ENCODE measurements at regions of chr5 and their contacts with region 1.

Region 1: GRCh38 chr5:188488-189481 is 2.5 kb upstream of the LRRC14B start:
- DNase-seq: peak; percentile 79 to 92 (median 85)
- ATAC-seq: peak; percentile 98
- H3K4me3 ChIP-seq: no peak overlapping the region
- H3K4me3 Mint-ChIP-seq: peak overlapping the region; percentile 34
- H3K27ac ChIP-seq: no peak overlapping the region
- H3K27ac Mint-ChIP-seq: no peak overlapping the region
- H3K4me1 ChIP-seq: peaks cover 17% of the 10 kb centered on the region
- H3K4me1 Mint-ChIP-seq: peaks cover 7% of the 10 kb centered on the region
- H3K27me3 ChIP-seq: peaks cover 4 to 5% of the 10 kb centered on the region in 2 experiments
- H3K27me3 Mint-ChIP-seq: peaks cover 7% of the 10 kb centered on the region
- CTCF ChIP-seq: peak; percentile 91

Region 2: DNA sequence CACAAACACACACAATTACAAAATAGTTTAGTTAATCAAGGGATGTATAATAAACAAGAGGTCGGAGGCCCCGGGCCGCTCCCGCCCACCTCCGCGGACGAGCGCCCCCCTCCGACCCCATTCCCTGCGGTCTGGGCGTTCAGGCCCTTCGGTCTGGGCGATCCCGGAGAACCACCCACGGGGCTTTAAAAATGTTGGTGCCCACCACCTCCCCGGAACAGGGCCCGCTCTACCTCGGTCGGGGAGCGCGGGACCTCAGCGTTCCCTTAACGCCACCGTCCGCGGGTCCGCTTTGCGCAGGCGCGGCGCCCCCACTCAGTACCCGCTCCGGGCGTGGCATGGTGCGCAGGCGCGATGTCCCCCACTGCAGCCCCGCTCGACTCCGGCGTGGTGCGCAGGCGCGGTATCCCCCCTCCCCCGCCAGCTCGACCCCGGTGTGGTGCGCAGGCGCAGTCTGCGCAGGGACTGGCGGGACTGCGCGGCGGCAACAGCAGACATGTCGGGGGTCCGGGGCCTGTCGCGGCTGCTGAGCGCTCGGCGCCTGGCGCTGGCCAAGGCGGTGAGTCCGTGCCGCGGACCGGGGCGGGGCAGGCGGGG is 29.2 kb after region 1 on chr5 and contains the starts of genes CCDC127 and SDHA:
- CTCF ChIA-PET with region 1: interaction called, 19 read pairs
- POLR2A ChIA-PET with region 1: interaction called, 25 read pairs
- intact Hi-C with region 1: loop called (anchors 1 kb)
- DNase-seq: peak; percentile 95 to 100 (median 98)
- ATAC-seq: peak; percentile 81
- H3K4me3 ChIP-seq: peak within 1 kb of the TSS; percentile 93
- H3K4me3 Mint-ChIP-seq: peak within 1 kb of the TSS; percentile 99
- H3K27ac ChIP-seq: peak within 1 kb of the TSS; percentile 57 to 80
- H3K27ac Mint-ChIP-seq: peak within 1 kb of the TSS; percentile 96
- H3K4me1 ChIP-seq: peaks cover 46% of the 10 kb centered on the region
- H3K4me1 Mint-ChIP-seq: peaks cover 68% of the 10 kb centered on the region
- H3K27me3 ChIP-seq: no peaks in the 10 kb centered on the region
- H3K27me3 Mint-ChIP-seq: no peaks in the 10 kb centered on the region
- CTCF ChIP-seq: peak; percentile 30
- total RNA-seq, gene CCDC127: 1.9 to 2.8 TPM
- total RNA-seq, gene SDHA: 244 to 245 TPM

Region 3: DNA sequence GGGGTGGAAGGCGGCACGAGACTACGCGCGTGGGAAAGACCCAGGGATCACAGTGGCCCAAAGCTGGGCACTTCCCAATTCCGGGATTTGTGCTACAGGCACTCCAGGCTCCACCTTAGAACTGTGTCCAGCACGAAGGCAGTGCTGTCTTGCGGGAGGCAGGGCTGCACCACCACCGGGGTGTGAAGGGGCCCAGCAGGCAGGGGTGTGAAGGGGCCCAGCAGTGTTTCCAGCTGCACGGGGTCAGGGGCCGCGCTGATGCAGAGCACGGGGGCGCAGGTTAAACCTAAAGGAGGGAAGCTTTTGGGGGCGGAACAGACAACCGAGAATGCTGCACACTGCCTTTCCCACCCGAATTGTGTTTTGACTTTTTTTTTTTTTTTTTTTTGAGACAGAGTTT is 81.6 kb after region 1 on chr5:
- CTCF ChIA-PET with region 1: no interaction called
- POLR2A ChIA-PET with region 1: interaction called, 7 read pairs
- intact Hi-C with region 1: loop called in 1 of 2 experiments (anchors 1 kb)
- DNase-seq: peak in 1 of 14 experiments; percentile 32
- ATAC-seq: no peak
- H3K4me3 ChIP-seq: peak overlapping the region; percentile 78
- H3K4me3 Mint-ChIP-seq: peak overlapping the region; percentile 82
- H3K27ac ChIP-seq: no peak overlapping the region
- H3K27ac Mint-ChIP-seq: peak overlapping the region; percentile 87
- H3K4me1 ChIP-seq: peaks cover 22% of the 10 kb centered on the region
- H3K4me1 Mint-ChIP-seq: peaks cover 37% of the 10 kb centered on the region
- H3K27me3 ChIP-seq: no peaks in the 10 kb centered on the region
- H3K27me3 Mint-ChIP-seq: no peaks in the 10 kb centered on the region
- CTCF ChIP-seq: no peak

Region 4: DNA sequence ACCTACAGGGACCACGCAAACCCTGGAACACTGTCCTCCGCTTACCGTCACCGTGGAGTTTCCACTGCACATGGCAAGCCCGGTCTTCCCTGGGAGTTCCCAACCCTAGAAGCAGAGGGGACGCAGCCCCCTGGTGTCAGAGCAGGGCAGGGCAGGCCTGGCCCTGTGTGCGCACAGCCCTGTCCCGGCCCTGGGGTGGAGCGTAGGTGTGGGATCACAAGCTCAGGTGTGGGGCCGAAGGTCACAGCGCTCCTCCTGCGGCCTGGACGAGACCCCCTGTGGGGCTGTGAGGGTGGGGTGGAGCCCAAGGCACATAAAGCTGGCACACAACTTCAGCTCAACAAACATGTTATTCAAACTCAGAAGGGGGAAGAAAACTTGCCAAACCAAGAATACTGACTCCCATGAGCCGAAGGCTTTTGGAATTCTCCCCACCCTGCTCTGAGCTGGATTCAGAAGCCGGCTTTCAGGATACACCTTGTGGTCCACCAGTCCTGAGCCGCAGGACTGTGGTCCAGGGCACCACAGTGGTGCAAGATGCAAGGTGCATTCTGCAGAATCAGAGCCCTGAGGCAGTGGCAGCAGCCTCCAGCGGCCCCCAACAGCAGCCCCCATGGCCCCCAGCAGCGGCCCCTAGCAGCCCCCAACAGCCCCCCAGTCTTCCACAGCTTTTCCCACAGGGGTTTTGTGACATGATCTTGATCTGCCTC is 242.4 kb after region 1 on chr5:
- CTCF ChIA-PET with region 1: no interaction called
- POLR2A ChIA-PET with region 1: no interaction called
- intact Hi-C with region 1: loop called in 1 of 2 experiments (anchors 2 kb)
- DNase-seq: peak in 8 of 14 experiments; percentile 11 to 62 (median 34)
- ATAC-seq: peak; percentile 71
- H3K4me3 ChIP-seq: no peak overlapping the region
- H3K4me3 Mint-ChIP-seq: no peak overlapping the region
- H3K27ac ChIP-seq: no peak overlapping the region
- H3K27ac Mint-ChIP-seq: no peak overlapping the region
- H3K4me1 ChIP-seq: no peaks in the 10 kb centered on the region
- H3K4me1 Mint-ChIP-seq: no peaks in the 10 kb centered on the region
- H3K27me3 ChIP-seq: peaks cover 0 to 4% of the 10 kb centered on the region in 2 experiments
- H3K27me3 Mint-ChIP-seq: peaks cover 6% of the 10 kb centered on the region
- CTCF ChIP-seq: peak; percentile 55

Measured in CD4-positive, alpha-beta T cell (primary cell).